ENCODE measurements at regions of chr14 and their contacts with region 1.

Region 1: DNA sequence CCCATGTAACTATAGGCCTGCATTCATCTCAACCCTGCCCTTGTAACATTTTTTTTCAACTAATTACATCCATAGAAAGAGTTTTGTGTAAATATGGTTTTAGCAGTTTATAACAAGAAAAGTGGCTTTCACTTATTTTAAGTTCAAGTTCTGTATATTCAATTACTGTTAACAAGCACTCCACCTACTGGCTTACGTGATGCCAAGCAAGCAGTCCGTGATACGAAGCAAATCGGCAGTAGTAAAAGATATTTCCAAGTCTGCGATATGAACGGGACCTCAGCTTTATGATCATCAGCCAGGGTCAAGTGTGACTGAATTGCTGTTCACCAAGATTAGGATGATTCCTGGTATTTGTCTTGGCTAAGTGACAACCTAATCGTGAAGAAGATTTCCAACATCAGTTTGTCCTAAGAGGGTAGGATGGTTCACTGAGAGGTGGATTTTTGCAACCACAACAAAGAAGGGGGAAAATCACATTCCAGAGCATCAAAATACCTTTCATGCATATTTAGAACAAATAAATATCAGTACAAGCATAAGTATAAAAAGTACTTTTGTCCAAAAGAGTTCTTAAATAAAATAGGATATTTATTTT is 456.2 kb downstream of the FOXG1 start:
- DNase-seq: peak; percentile 47
- H3K4me3 Mint-ChIP-seq: no peak overlapping the region
- H3K27ac Mint-ChIP-seq: no peak overlapping the region
- H3K4me1 Mint-ChIP-seq: no peaks in the 10 kb centered on the region
- H3K27me3 Mint-ChIP-seq: peaks cover 97% of the 10 kb centered on the region
- CTCF ChIP-seq: peak; percentile 59

Region 2: GRCh38 chr14:28756884-28757570 is 465.7 kb before region 1 on chr14:
- CTCF ChIA-PET with region 1: interaction called, 11 read pairs
- POLR2A ChIA-PET with region 1: no interaction called
- intact Hi-C with region 1: loop called (anchors 1 kb)
- DNase-seq: peak; percentile 60
- H3K4me3 Mint-ChIP-seq: peak overlapping the region; percentile 48
- H3K27ac Mint-ChIP-seq: no peak overlapping the region
- H3K4me1 Mint-ChIP-seq: peaks cover 23% of the 10 kb centered on the region
- H3K27me3 Mint-ChIP-seq: peaks cover 81% of the 10 kb centered on the region
- CTCF ChIP-seq: peak; percentile 73

Region 3: GRCh38 chr14:28902930-28903329 is 319.8 kb before region 1 on chr14:
- CTCF ChIA-PET with region 1: no interaction called
- POLR2A ChIA-PET with region 1: no interaction called
- intact Hi-C with region 1: no loop called
- DNase-seq: no peak
- H3K4me3 Mint-ChIP-seq: no peak overlapping the region
- H3K27ac Mint-ChIP-seq: no peak overlapping the region
- H3K4me1 Mint-ChIP-seq: no peaks in the 10 kb centered on the region
- H3K27me3 Mint-ChIP-seq: peaks cover 85% of the 10 kb centered on the region
- CTCF ChIP-seq: no peak

Region 4: GRCh38 chr14:29016050-29016900 is 206.5 kb before region 1 on chr14:
- CTCF ChIA-PET with region 1: interaction called, 5 read pairs
- POLR2A ChIA-PET with region 1: no interaction called
- intact Hi-C with region 1: loop called (anchors 1 kb)
- DNase-seq: peak; percentile 31
- H3K4me3 Mint-ChIP-seq: no peak overlapping the region
- H3K27ac Mint-ChIP-seq: no peak overlapping the region
- H3K4me1 Mint-ChIP-seq: no peaks in the 10 kb centered on the region
- H3K27me3 Mint-ChIP-seq: peaks cover 73% of the 10 kb centered on the region
- CTCF ChIP-seq: peak; percentile 75

Region 5: DNA sequence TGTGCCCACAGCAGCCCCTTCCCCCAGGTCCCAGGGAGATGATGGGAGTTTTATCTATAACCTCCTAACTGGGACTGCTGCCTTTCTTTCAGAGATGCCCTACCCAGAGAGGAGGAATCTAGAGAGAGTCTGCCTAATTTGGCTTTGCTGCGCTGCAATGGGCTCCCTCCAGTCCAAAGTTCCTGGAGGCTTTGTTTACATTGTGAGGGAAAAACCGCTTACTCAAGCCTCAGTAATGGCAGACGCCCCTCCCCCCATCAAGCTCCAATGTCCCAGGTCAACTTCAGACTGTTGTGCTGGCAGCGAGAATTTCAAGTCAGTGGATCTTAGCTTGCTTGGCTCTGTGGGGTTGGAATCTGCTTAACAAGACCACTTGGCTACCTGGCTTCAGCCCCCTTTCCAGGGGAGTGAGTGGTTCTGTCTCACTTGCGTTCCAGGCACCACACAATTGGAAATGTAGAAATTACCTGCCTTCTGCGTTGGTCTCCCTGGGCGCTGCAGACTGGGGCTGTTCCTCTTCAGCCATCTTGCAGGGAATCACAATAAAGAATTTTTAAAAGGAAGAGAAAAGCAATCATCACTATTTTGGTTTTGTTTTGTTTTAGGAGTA is 193.7 kb before region 1 on chr14:
- CTCF ChIA-PET with region 1: no interaction called
- POLR2A ChIA-PET with region 1: no interaction called
- intact Hi-C with region 1: no loop called
- DNase-seq: no peak
- H3K4me3 Mint-ChIP-seq: no peak overlapping the region
- H3K27ac Mint-ChIP-seq: no peak overlapping the region
- H3K4me1 Mint-ChIP-seq: no peaks in the 10 kb centered on the region
- H3K27me3 Mint-ChIP-seq: peaks cover 58% of the 10 kb centered on the region
- CTCF ChIP-seq: no peak